Posterior vena cava (tissue), 2 donors: ENCODE measurements at regions of chr12 and their contacts with region 1.

Region 1: DNA sequence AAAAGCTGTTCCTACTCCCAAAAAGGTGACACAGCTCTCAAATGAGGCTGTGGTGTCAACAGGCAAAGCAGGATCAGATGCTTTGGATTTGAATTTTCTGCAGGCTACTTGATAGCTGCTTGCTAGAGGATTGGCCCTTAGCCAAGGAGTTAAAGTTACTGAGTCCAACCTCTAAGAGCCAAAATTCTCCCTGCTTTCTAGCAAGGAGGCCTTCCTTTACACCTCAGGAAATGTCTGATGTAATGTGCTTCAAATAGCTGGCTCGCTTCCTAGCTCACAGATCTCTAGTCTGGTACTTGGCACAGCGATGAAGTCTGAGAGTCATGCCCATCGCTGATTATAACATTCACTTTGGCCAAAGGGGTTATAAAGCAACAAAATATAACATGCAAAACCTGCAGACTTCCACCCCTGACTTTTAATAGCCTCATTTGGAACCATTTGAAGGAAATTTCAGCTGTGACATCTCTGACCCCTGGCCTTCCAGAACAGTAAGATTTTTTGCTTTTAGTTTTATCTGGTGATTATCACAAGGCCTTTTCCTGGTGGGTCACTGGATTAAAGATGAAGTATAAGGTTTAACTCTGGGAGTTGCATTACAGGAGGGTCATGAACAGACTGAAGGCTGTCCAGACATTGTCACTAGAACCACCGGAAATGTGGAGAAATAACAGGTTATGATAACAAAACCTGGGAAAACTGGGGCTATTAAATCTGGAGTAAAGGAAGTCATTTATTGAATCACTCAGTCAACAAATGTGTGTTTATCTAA is 189.7 kb downstream of the EPS8 start:
- DNase-seq: no peak

Region 2: GRCh38 chr12:16076553-16076952 is 477.1 kb after region 1 on chr12:
- intact Hi-C with region 1: loop called in 1 of 2 experiments (anchors 10 kb)
- DNase-seq: no peak